Transverse colon (tissue), 4 donors: ENCODE measurements at regions of chr12 and their contacts with region 1.

Region 1: DNA sequence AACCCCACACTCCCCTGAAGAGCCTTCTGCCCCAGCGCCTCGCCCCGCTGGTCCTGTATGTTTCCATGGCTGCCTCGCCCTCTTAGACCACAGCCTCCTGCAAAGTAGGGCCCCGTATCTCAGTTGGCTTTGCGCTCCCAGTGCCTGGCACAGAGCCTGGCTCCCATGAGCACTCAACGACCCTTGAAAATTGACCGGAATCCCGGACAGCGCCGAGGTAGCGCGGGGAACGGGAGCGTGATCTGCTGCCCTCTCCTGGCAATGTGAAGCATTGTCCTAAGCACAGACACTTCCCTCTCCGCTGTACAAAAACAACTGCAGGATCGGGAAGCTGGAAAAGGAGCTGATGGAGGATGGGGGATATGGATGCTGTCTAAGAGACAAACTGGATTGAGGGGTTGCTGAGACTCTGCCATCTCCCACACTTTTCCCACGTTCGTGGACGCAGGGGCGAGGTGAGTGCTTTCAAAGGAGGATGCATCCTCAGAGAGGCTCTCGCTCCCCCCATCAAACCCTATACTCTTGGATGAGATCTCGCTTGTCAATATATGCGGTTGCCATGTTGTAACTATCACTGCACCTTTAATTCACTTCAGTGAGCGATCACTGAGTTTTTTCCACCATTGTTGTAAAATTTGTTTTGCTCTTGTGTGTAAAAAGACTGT is 10.7 kb upstream of the FKBP4 start:
- DNase-seq: peak; percentile 67
- H3K4me3 ChIP-seq: peak overlapping the region in 1 of 4 donors; percentile 33
- H3K27ac ChIP-seq: no peak overlapping the region
- H3K4me1 ChIP-seq: peaks cover 4 to 17% (median 14%) of the 10 kb centered on the region in 4 donors
- H3K27me3 ChIP-seq: no peaks in the 10 kb centered on the region
- CTCF ChIP-seq: peak; percentile 87 to 92 (median 90)
- EP300 ChIP-seq: no peak
- POLR2A ChIP-seq: no peak

Region 2: GRCh38 chr12:2682296-2683251 is 101.5 kb before region 1 on chr12:
- in situ Hi-C with region 1: loop called in 1 of 4 experiments (anchors 10 kb)
- intact Hi-C with region 1: no loop called
- DNase-seq: peak; percentile 31
- H3K4me3 ChIP-seq: no peak overlapping the region
- H3K27ac ChIP-seq: peak overlapping the region in 1 of 4 donors; percentile 24
- H3K4me1 ChIP-seq: peaks cover 6 to 10% (median 8%) of the 10 kb centered on the region in 4 donors
- H3K27me3 ChIP-seq: no peaks in the 10 kb centered on the region
- CTCF ChIP-seq: peak; percentile 36 to 52 (median 49)
- EP300 ChIP-seq: no peak
- POLR2A ChIP-seq: no peak

Region 3: DNA sequence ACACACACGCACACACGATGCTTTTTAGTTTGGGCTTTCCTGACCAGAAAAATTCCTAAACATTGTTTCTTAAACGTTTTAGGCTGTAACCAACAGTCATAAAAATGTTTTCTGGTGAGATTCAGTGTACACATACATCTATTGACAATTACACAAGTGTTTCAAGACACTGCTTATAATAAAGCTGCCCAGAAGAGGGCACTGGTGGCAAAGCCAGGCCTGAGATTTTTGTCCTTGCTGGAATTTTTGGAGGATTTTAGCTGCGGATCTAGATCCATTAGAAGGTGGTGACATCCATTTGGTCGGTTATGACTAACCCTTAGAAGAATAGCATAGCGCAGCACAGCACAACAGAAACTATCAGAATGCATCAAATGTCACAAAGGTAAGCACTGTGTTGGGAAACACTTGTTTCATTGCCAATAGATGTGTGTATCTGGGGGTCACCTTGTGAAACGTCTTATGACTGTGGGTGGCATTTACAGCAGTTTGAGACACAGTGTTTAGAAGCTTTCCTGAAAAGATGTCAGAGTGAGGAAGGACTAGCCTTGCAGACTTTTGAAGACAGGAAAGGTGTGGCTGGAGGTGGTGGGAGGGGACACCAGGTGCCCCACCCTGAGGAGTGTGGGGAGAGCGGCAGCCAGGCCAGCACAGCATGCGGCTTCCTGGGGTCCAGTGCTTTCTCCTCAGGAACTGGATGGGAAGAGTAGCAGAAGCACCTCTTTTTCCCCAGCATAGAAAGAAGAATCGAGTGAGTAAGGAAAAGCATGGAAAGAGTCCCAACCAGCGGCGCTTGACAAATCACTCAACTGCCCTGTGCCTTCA is 44.0 kb before region 1 on chr12:
- in situ Hi-C with region 1: loop called in 1 of 4 experiments (anchors 10 kb)
- intact Hi-C with region 1: no loop called
- DNase-seq: peak; percentile 19
- H3K4me3 ChIP-seq: no peak overlapping the region
- H3K27ac ChIP-seq: no peak overlapping the region
- H3K4me1 ChIP-seq: peaks cover 0 to 5% (median 0%) of the 10 kb centered on the region in 4 donors
- H3K27me3 ChIP-seq: no peaks in the 10 kb centered on the region
- CTCF ChIP-seq: peak; percentile 37 to 71 (median 59)
- EP300 ChIP-seq: no peak
- POLR2A ChIP-seq: no peak

Region 4: DNA sequence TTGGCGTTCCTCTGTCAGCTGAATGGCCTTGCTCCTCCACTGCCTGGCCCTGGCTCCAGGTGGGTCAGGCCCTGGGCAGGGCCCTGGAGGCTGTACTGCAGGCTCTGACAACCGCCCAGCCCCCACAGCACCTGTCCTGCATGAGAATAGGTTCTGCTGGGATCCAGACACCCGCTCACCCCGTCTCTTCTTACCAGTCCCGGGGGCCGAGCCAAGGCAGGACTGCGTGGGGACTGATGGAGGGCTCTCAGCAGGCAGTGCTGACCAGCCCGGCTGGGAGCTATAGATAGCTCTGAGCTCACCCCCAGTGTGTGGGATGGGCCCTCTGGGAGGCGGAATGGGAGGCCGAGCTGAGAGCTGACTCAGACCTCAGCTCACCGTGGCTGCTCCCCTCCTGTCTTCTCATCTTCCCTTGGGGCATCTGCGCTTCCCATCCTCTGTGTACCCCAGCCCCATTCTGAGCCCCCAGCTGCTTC is 214.8 kb after region 1 on chr12:
- in situ Hi-C with region 1: no loop called
- intact Hi-C with region 1: no loop called
- DNase-seq: no peak
- H3K4me3 ChIP-seq: no peak overlapping the region
- H3K27ac ChIP-seq: no peak overlapping the region
- H3K4me1 ChIP-seq: no peaks in the 10 kb centered on the region
- H3K27me3 ChIP-seq: no peaks in the 10 kb centered on the region
- CTCF ChIP-seq: no peak
- EP300 ChIP-seq: no peak
- POLR2A ChIP-seq: no peak